Motor neuron (in vitro differentiated cells): ENCODE measurements at regions of chrX and their contacts with region 1.

Region 1: DNA sequence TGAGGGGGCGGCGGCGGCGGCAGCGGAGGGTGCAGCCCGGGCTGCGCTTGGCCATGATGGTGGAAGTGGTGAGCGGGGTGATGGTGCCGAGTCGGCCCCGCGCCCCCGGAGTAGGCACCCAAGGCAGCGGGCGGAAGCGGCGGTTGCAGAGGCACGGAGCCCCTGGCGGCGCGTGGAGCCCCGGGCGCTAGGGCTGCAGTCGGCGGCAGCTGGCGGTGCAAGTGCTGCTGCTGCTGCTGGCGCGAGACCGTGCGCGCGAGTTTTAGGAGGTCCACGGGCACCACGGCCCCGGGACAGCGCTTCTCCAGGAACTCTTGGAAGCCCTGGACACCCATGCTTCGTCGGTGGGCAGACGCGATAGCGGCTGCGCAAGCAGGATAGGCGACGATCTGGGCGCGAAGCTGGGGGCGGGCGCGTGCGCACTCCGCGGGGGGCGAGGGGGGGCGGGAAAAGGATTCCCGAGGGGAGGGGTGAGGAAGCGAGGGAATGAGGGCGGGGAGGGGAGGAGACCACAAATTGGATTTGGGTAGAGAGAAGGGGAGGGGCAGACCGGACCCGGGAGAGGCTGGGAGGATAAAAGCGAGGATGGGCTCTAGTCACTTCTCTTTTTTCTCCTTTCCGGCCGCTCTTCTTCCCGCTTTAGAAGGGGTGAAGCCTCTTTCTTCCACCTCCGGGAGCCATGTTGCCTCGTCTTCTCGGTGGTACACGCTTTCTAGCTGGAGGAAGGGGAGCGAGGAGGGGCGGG is at the start of gene FAM120C:
- ATAC-seq: peak; percentile 58 to 83 (median 78)
- H3K4me3 ChIP-seq: peak within 1 kb of the TSS; percentile 51 to 97 (median 59)
- H3K27ac ChIP-seq: peak within 1 kb of the TSS; percentile 100
- H3K4me1 ChIP-seq: peaks cover 0 to 23% of the 10 kb centered on the region in 2 donors
- total RNA-seq, gene FAM120C: 2.5 to 10.4 (median 4.5) TPM

Region 2: DNA sequence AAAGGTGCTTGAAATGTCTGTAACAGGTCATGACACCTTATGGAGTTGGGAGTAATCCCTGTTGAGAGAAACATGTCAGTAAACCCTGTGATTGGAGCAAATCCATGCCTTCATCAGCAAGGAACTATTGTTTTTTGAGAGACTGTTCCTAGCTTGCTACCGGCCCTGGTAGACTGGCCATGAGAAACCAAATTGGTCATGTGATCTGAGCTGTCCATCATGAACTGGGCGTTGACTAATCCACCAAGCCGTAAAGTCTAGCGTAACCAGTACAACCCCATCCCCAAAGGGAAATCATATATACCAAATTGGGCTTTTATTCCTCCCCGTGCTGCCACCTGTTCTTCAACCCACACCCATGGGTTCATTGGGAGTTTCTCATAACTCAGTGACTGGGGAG is 282.4 kb before region 1 on chrX:
- in situ Hi-C with region 1: no loop called
- ATAC-seq: no peak
- H3K4me3 ChIP-seq: no peak overlapping the region
- H3K27ac ChIP-seq: no peak overlapping the region
- H3K4me1 ChIP-seq: no peaks in the 10 kb centered on the region

Region 3: DNA sequence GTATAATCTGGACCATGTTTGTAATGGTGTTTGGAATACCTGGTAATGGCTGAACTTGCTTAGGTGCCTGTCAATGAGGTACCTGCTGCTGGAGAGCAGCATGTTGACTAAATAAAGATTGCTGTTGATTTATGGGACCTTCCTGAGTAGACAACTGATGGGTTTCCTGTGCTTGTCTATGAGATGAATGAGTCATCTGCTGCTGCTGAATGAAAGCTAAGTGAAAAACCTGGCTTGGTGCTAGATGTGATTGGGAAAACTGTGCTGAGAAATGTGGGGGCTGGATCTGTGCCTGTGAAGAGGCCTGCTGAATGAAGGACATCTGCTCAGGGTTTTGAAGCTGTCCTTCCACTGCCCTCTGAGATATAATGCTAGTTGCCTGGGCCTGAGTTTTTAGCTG is 105.2 kb after region 1 on chrX:
- in situ Hi-C with region 1: loop called in 1 of 9 experiments (anchors 25 kb)
- ATAC-seq: no peak
- H3K4me3 ChIP-seq: no peak overlapping the region
- H3K27ac ChIP-seq: no peak overlapping the region
- H3K4me1 ChIP-seq: no peaks in the 10 kb centered on the region

Region 4: DNA sequence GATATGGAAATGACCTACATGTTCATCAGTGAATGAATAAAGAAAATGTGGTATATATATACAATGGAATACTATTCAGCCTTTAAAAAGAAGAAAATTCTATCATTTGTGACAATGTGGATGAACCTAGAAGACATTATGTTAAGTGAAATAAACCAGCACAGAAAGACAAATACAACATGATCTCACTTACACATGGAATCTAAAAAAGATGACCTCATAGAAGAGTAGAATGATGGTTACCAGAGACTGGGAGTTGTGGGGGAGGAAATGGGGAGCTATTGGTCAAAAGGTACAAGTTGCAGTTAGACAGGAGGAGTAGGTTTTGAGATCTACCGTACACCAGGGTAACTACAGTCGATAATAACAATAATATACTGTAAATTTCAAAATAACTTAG is 123.3 kb after region 1 on chrX:
- in situ Hi-C with region 1: no loop called
- ATAC-seq: no peak
- H3K4me3 ChIP-seq: no peak overlapping the region
- H3K27ac ChIP-seq: no peak overlapping the region
- H3K4me1 ChIP-seq: no peaks in the 10 kb centered on the region